Dorsolateral prefrontal cortex (tissue), 120 donors: ENCODE measurements at regions of chr1 and their contacts with region 1.

Region 1: DNA sequence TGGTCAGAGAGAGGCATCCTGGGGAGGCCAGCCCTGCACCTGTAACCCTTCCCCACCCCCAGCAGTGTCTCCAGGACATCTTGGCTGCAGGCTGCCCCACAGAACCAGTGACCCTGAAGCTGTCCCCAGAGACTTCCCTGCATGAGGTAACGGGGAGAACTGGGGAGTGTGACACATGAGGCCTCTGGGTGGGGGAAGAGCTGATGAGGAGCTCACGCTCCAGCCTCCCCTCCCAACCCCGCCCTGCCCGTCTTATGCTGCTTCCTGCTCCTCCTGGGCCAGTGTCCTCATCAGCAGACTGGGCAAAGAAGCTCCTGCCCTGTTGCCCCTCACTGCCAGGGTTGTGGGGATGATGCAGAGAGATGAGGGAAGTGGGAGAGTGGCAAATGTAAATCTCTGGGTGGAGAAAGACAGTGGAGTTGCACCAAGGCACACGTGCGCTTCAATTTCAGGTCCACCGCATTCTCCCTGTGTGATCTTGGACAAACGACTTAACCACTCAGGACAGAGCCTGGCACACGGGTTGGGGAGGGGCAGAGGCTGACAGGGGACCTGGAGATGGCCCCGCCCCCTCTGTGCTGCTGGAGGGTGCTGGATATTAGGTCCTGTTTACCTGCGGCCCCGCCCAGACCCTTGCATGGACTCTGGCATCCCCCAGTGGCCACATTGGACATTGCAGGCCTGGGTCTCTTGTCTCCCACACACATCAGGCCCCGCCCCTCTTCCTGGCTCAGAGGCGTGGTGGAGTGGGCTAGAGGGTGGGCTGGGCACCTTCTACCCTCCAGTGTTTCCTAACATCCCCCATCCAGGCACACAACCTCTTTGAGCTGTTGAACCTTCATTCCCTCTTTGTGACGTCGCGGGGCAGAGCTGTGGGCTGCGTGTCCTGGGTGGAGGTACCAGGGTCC is 12.3 kb downstream of the CLCNKB start:
- DNase-seq: peak; percentile 67 to 91 (median 80)
- H3K4me3 ChIP-seq: no peak overlapping the region
- H3K27ac ChIP-seq: no peak overlapping the region
- H3K27me3 ChIP-seq: no peaks in the 10 kb centered on the region
- CTCF ChIP-seq: peak; percentile 48 to 97 (median 84)

Region 2: GRCh38 chr1:15803354-15803753 is 252.5 kb before region 1 on chr1:
- intact Hi-C with region 1: loop called in 1 of 2 experiments (anchors 10 kb)
- DNase-seq: no peak
- H3K4me3 ChIP-seq: no peak overlapping the region
- H3K27ac ChIP-seq: no peak overlapping the region
- H3K27me3 ChIP-seq: no peaks in the 10 kb centered on the region
- CTCF ChIP-seq: peak in 51 of 56 donors; percentile 11 to 67 (median 38)

Region 3: GRCh38 chr1:16032388-16033103 is 23.3 kb before region 1 on chr1:
- intact Hi-C with region 1: loop called in 1 of 2 experiments (anchors 1 kb)
- DNase-seq: peak; percentile 53 to 80 (median 71)
- H3K4me3 ChIP-seq: no peak overlapping the region
- H3K27ac ChIP-seq: no peak overlapping the region
- H3K27me3 ChIP-seq: peaks cover 0 to 12% (median 0%) of the 10 kb centered on the region in 45 donors
- CTCF ChIP-seq: peak; percentile 65 to 95 (median 87)

Region 4: GRCh38 chr1:16101623-16102022 is 45.8 kb after region 1 on chr1:
- intact Hi-C with region 1: no loop called
- DNase-seq: no peak
- H3K4me3 ChIP-seq: no peak overlapping the region
- H3K27ac ChIP-seq: no peak overlapping the region
- H3K27me3 ChIP-seq: peaks cover 0 to 3% (median 0%) of the 10 kb centered on the region in 45 donors
- CTCF ChIP-seq: no peak